IMR-90 (cell line): ENCODE measurements at regions of chr11 and their contacts with region 1.

Region 1: GRCh38 chr11:80649186-80649585 is 1208.4 kb upstream of the TENM4 start:
- DNase-seq: no peak
- ATAC-seq: no peak
- H3K4me3 ChIP-seq: no peak overlapping the region
- H3K27ac ChIP-seq: no peak overlapping the region
- H3K4me1 ChIP-seq: no peaks in the 10 kb centered on the region
- H3K27me3 ChIP-seq: no peaks in the 10 kb centered on the region
- CTCF ChIP-seq: no peak
- POLR2A ChIP-seq: no peak
- RAD21 ChIP-seq: no peak

Region 2: DNA sequence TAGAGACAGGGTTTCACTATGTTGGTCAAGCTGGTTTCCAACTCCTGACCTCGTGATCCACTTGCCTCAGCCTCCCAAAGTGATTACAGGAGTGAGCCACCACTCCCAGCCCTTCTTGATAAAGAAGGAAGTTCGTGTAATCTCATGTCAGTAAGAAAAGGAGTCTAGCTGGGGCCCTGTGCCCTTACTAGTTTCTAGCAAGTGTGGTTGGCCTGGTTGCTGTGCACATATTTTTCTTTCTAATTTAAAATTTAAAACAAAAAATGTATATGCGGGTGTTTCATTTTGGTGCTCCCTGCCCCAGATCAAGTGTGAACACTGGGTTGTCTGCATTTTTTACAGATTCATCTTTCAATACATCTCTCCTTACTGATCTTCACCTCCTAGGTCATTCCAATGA is 437.5 kb before region 1 on chr11:
- CTCF ChIA-PET with region 1: no interaction called
- POLR2A ChIA-PET with region 1: interaction called, 14 read pairs
- dilution Hi-C with region 1: no loop called
- in situ Hi-C with region 1: no loop called
- intact Hi-C with region 1: no loop called
- DNase-seq: no peak
- ATAC-seq: no peak
- H3K4me3 ChIP-seq: no peak overlapping the region
- H3K27ac ChIP-seq: no peak overlapping the region
- H3K4me1 ChIP-seq: no peaks in the 10 kb centered on the region
- H3K27me3 ChIP-seq: no peaks in the 10 kb centered on the region; the same call in 1 of the 2 replicates
- CTCF ChIP-seq: no peak
- POLR2A ChIP-seq: no peak
- RAD21 ChIP-seq: no peak

Region 3: GRCh38 chr11:80532633-80533216 is 116.5 kb before region 1 on chr11:
- CTCF ChIA-PET with region 1: no interaction called
- POLR2A ChIA-PET with region 1: no interaction called
- dilution Hi-C with region 1: no loop called
- in situ Hi-C with region 1: no loop called
- intact Hi-C with region 1: no loop called
- DNase-seq: no peak
- ATAC-seq: no peak
- H3K4me3 ChIP-seq: no peak overlapping the region
- H3K27ac ChIP-seq: no peak overlapping the region
- H3K4me1 ChIP-seq: no peaks in the 10 kb centered on the region
- H3K27me3 ChIP-seq: no peaks in the 10 kb centered on the region
- CTCF ChIP-seq: no peak
- POLR2A ChIP-seq: no peak
- RAD21 ChIP-seq: no peak